AG04450 (cell line): ENCODE measurements at regions of chr17 and their contacts with region 1.

Region 1: GRCh38 chr17:39416141-39416540 is 14.7 kb upstream of the FBXL20 start:
- DNase-seq: no peak
- H3K4me3 ChIP-seq: no peak overlapping the region
- H3K27ac ChIP-seq: no peak overlapping the region
- H3K27me3 ChIP-seq: no peaks in the 10 kb centered on the region
- CTCF ChIP-seq: no peak

Region 2: GRCh38 chr17:39401412-39402243 is 14.5 kb before region 1 on chr17 and contains the start of gene FBXL20:
- CTCF ChIA-PET with region 1: no interaction called
- POLR2A ChIA-PET with region 1: no interaction called
- DNase-seq: peak; percentile 63
- H3K4me3 ChIP-seq: peak within 1 kb of the TSS; percentile 84
- H3K27ac ChIP-seq: peak within 1 kb of the TSS; percentile 48
- H3K27me3 ChIP-seq: no peaks in the 10 kb centered on the region
- CTCF ChIP-seq: no peak
- polyA plus RNA-seq, gene FBXL20: 5.7 and 6.7 TPM in 2 replicates

Region 3: GRCh38 chr17:39443326-39443725 is 27.2 kb after region 1 on chr17:
- CTCF ChIA-PET with region 1: no interaction called
- POLR2A ChIA-PET with region 1: interaction called, 13 read pairs
- DNase-seq: no peak
- H3K4me3 ChIP-seq: no peak overlapping the region
- H3K27ac ChIP-seq: no peak overlapping the region
- H3K27me3 ChIP-seq: no peaks in the 10 kb centered on the region
- CTCF ChIP-seq: no peak